Posterior vena cava (tissue), 2 donors: ENCODE measurements at regions of chr6 and their contacts with region 1.

Region 1: DNA sequence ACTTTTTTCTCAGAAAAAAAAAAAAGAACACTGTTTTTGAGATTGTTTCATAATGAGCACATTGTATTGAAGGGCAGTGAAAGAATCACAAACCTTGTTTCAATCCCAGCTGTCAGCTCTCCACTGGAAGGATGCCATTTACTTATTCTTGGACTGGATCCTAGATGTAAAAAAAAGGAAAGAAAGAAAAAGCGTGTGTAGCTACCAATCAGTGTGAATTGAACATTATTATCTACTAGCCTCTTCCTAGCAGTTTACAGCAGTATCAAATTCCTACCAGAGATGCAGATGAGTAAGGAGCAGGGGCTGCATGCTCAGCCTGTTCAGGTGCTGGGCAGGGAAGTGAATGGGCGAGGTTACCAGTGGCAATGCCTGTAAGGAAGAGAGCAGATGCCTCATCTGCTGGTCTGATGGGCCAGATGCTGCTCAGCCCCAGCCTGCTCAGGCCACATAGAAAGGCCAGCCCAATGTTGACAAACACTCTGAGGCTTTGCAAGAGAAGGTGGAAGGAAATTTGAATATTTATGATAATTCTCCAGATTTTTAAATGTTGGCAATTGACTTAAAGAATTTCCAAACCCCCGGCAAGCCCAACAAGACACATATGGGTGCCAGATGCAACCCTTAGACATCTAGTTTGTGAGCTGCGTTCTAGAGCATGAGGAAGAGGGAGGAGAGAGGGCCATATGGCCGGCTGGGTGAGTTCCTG is 189.5 kb downstream of the IBTK start:
- DNase-seq: no peak

Region 2: DNA sequence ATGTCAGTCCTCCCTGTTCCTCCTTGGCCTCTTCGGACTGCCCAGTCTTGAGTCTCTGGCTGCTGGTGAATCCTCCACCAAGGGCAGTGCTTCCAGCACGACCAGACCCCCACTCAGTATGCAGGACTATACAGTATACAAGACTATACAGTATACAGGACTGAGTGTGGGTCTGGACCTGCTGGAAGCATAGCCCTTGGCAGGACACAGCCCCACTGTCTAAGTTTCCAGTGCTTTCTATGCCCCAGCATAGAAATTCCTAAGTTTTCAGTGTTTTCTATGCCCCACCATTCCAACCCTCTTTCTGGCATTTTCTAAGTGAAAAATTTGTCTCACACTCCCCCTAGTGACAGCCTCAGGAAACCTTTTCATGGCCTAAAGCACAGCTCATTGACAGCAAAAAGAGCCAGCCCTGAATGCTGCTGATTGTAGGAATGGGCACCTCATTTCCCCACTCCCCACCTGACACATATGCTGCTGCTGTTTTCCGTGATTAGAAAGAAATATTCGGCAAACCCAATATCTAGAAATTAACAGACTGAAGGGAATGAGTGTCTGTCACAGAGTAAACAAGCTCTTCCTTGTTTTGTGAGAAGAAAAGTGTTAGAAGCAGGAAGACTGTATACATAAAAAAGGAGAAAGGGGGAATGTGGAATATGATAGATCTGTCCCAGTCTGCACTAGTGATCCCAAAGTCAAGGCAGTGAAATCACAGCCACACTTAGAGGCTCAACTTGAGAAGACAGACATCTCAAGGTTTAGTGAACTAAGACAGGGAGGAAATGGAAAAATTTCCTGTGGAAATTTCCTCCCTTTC is 17.4 kb before region 1 on chr6:
- intact Hi-C with region 1: loop called in 1 of 2 experiments (anchors 2 kb)
- DNase-seq: no peak

Region 3: GRCh38 chr6:82129797-82130196 is 71.8 kb after region 1 on chr6:
- intact Hi-C with region 1: no loop called
- DNase-seq: no peak

Region 4: DNA sequence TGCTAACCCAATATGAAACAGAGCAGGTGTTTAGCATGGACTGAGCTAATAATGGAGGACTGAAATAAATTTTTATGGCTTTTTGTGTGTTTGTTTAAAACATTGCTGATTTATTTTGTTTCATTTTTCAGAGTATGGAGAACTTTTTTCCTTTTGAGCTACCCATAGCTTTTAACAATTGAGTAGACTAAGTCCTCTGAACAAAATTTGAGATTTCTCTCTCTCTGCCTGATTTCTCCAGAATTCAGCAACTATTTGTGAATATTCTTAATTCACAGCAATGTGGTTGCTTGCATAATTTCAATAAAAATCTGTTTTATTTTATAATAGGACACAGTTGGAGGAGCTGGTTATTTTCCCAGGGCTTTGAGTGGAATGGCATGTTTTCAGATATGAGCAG is 409.3 kb after region 1 on chr6:
- intact Hi-C with region 1: no loop called
- DNase-seq: no peak